ENCODE measurements at regions of chr6 and their contacts with region 1.

Region 1: GRCh38 chr6:26249957-26250697 is 114.9 kb upstream of the BTN3A2 start:
- DNase-seq: peak; percentile 84
- H3K4me3 Mint-ChIP-seq: peak overlapping the region; percentile 82
- H3K27ac Mint-ChIP-seq: peak overlapping the region; percentile 99
- H3K4me1 Mint-ChIP-seq: peaks cover 22% of the 10 kb centered on the region
- H3K27me3 Mint-ChIP-seq: no peaks in the 10 kb centered on the region

Region 2: DNA sequence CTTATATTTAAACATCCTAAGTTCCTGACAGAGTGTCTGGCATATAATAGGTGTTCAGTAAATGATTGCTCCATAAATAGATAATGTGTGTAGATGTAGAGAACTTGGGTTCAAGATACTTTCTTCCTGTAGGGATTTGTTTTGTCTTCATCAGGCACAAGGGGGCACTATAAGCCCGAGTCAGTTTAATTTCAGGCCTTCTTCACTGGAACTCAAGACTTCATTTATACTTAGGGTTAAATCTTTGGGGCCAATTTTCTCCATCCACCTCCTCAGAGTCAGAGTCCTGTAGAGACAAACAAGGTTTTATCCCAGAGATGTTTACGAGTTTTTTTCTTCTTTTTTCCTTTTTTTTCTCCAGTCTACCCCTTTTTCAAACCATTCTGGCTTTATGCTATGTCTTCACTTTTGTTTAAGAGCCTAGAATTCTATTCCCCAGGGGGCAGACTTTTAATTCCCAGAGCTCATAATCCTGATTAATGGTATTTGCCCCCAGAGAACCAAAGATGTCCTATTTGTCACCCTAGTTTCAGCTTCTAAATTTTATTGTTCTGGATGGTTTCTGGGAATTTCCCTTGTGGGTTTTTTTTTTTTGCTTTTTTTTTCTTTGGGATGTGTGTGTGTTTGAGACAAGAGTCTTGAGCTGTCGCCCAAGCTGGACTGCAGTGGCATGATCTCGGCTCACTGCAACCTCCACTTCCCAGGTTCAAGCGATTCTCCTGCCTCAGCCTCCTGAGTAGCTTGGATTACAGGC is 74.5 kb before region 1 on chr6:
- CTCF ChIA-PET with region 1: no interaction called
- POLR2A ChIA-PET with region 1: interaction called, 3 read pairs
- intact Hi-C with region 1: loop called (anchors 2 kb)
- DNase-seq: peak; percentile 63
- H3K4me3 Mint-ChIP-seq: peak overlapping the region; percentile 24
- H3K27ac Mint-ChIP-seq: peak overlapping the region; percentile 43
- H3K4me1 Mint-ChIP-seq: peaks cover 31% of the 10 kb centered on the region
- H3K27me3 Mint-ChIP-seq: no peaks in the 10 kb centered on the region

Region 3: DNA sequence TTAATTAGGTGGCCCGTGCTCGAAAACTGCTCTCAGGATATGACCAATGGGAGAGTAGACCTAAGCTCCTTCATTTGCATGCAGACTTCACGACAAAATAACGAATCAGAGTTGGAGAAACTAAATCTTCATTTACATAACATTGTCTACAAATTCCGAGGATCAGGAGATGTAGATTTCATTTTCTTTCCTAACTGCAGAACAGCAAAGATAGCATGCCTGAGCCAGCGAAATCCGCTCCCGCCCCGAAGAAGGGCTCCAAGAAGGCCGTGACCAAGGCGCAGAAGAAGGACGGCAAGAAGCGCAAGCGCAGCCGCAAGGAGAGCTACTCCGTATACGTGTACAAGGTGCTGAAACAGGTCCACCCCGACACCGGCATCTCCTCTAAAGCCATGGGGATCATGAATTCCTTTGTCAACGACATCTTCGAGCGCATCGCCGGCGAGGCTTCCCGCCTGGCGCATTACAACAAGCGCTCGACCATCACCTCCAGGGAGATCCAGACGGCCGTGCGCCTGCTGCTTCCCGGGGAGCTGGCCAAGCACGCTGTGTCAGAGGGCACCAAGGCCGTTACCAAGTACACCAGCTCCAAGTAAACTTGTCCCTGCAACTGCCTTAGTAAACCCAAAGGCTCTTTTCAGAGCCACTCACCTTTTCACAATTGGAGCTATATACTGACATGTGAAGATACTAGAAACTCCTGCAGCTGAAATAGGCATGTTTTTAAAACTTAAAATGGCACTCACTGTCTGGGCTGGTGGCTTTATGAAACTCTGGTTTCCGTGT is 66.4 kb before region 1 on chr6:
- CTCF ChIA-PET with region 1: interaction called, 4 read pairs
- POLR2A ChIA-PET with region 1: interaction called, 11 read pairs
- intact Hi-C with region 1: no loop called
- DNase-seq: peak; percentile 80
- H3K4me3 Mint-ChIP-seq: peak overlapping the region; percentile 85
- H3K27ac Mint-ChIP-seq: peak overlapping the region; percentile 95
- H3K4me1 Mint-ChIP-seq: peaks cover 37% of the 10 kb centered on the region
- H3K27me3 Mint-ChIP-seq: peaks cover under 1% of the 10 kb centered on the region

Region 4: DNA sequence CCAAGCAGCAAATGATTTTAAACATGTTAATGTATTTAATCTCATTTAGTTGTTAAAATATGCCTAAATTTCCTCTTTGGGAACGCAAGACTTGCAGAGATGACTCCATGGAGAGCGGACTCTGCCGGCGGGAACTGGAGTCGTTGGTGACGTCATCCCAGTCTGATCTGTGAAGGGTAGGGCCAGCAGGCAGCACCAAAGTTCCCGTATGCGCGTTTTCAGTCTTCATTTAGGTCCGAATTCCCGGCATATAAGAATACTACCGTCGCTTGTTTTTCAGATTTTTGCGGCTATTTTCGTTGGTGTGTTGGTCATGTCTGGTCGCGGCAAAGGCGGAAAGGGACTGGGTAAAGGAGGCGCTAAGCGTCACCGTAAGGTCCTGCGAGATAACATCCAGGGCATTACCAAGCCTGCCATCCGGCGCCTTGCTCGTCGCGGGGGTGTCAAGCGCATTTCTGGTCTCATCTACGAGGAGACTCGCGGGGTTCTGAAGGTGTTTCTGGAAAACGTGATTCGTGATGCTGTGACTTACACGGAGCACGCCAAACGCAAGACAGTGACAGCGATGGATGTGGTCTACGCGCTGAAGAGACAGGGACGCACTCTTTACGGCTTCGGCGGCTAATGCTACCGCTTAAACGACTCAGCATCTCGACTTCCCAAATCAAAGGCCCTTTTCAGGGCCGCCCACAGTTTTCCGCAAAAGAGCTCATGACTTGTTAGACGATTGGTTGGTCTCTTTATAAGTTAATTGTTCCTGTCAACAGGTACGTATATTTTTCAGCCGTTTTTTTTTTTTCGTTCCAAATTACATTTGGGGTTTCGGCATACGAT is 45.6 kb before region 1 on chr6:
- CTCF ChIA-PET with region 1: no interaction called
- POLR2A ChIA-PET with region 1: interaction called, 13 read pairs
- intact Hi-C with region 1: loop called (anchors 1 kb)
- DNase-seq: peak; percentile 90
- H3K4me3 Mint-ChIP-seq: no peak overlapping the region
- H3K27ac Mint-ChIP-seq: no peak overlapping the region
- H3K4me1 Mint-ChIP-seq: peaks cover 21% of the 10 kb centered on the region
- H3K27me3 Mint-ChIP-seq: peaks cover 3% of the 10 kb centered on the region

Region 5: DNA sequence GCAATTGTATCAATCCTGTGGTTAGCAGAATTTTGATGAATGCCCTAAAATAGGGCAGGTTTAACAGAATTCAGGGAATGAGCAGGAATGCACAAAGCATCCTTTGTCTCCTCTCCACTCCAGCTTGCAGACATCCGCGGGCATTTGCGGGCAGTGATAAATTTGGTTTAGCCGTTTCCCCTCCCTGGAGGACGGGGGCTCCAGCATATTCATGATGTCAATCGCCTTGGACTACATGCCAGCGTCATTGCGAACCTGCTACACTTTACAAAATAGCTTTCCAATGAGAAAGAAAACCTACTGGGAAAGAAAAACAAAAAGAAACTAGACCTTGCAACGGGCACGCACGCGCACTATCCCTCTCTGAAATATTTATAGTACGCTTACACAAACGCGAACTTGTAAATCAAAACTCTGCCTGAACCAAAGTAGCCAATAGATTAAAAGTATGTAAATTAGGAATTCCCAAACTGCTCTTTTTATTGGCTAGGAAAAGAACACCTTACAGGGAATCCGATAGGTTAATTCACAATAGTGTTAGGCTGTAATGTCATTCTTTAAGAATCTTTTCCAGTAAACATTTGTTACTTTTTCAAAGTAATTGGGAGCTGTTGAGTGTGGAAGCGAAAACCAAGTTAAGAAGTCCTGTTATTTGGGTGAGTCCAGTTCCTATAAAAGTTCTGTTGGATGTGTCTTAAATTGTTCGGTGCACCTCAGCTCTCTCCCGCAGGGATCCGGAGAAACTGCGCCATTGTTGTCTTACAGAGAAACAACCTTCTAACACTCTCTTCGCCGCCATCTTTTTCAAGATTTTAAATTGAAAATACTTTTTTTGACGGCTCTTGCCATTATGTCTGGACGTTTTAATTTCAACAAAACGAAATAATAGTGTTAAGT is 26.2 kb before region 1 on chr6:
- CTCF ChIA-PET with region 1: interaction called, 4 read pairs
- POLR2A ChIA-PET with region 1: interaction called, 14 read pairs
- intact Hi-C with region 1: no loop called
- DNase-seq: peak; percentile 77
- H3K4me3 Mint-ChIP-seq: no peak overlapping the region
- H3K27ac Mint-ChIP-seq: no peak overlapping the region
- H3K4me1 Mint-ChIP-seq: peaks cover 13% of the 10 kb centered on the region
- H3K27me3 Mint-ChIP-seq: no peaks in the 10 kb centered on the region

Region 6: DNA sequence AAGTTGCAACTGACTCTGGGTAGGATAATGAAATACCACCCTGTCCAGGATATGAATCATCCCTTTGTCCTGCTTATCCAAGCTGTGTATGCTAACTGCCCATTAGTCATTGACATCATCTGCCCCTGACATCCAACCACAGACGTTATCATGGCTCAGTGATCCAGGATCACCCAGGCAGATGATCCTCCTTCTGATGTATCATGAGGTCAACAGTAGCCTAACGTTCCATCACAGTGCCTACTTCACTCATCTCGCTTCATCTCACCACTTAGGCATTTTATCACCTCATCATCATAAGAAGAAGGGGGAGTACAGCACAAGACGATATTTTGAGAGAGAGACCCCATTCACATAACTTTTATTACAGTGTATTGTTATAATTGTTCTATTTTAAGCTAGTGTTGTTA is 101.4 kb after region 1 on chr6:
- CTCF ChIA-PET with region 1: no interaction called
- POLR2A ChIA-PET with region 1: no interaction called
- intact Hi-C with region 1: no loop called
- DNase-seq: no peak
- H3K4me3 Mint-ChIP-seq: no peak overlapping the region
- H3K27ac Mint-ChIP-seq: no peak overlapping the region
- H3K4me1 Mint-ChIP-seq: no peaks in the 10 kb centered on the region
- H3K27me3 Mint-ChIP-seq: no peaks in the 10 kb centered on the region

Measured in activated CD4-positive, alpha-beta memory T cell treated with anti-CD3 and anti-CD28 coated beads for 36 hours (primary cell).